GM18951 (cell line): ENCODE measurements at regions of chr12 and their contacts with region 1.

Region 1: GRCh38 chr12:68871921-68872320 is 61.0 kb downstream of the CPM start:
- POLR2A ChIP-seq: no peak

Region 2: GRCh38 chr12:68106160-68106559 is 765.8 kb before region 1 on chr12:
- in situ Hi-C with region 1: no loop called
- POLR2A ChIP-seq: no peak

Region 3: DNA sequence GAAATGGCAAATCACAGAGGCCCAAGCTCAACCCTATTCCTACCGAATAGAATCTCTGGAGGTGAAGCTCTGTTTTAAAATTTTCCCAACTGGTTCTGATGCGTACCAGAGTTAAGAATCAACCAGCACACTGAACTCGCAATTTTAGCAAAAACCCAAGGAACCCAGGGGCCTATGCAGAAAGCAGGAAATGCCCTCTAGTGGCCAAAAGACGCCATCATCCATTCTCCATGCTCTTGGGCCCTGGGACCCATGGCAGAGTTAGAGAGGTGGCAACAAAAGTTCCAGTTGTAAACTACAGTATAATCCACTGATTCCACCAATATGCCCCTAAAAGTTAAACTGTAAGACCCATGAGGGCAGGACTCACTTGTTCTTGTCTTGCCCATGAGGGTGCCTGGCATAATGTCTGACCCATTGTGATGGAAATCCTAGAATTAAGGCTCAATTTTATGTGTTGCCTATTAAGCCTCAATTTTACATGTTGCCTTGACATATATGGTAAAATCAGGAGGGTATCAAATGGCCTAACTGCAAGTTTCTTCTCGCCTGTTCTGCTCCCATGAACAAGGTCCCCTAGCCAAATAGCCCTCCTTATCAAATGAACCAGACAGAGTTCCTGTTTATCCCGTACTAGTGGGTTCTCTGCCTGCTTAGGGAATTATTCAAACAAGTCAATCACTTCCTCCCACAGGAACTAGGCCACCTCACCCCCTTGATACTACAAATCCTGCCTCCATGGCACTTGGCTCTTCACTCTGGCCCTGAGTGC is 198.6 kb after region 1 on chr12:
- in situ Hi-C with region 1: loop called (anchors 10 kb)
- POLR2A ChIP-seq: no peak